Activated naive CD4-positive, alpha-beta T cell treated with anti-CD3 and anti-CD28 coated beads for 36 hours (primary cell): ENCODE measurements at regions of chr17 and their contacts with region 1.

Region 1: GRCh38 chr17:36629252-36629847 is 28.0 kb downstream of the MRM1 start:
- DNase-seq: peak; percentile 87
- H3K4me3 Mint-ChIP-seq: no peak overlapping the region
- H3K27ac Mint-ChIP-seq: no peak overlapping the region
- H3K4me1 Mint-ChIP-seq: no peaks in the 10 kb centered on the region
- H3K27me3 Mint-ChIP-seq: no peaks in the 10 kb centered on the region

Region 2: DNA sequence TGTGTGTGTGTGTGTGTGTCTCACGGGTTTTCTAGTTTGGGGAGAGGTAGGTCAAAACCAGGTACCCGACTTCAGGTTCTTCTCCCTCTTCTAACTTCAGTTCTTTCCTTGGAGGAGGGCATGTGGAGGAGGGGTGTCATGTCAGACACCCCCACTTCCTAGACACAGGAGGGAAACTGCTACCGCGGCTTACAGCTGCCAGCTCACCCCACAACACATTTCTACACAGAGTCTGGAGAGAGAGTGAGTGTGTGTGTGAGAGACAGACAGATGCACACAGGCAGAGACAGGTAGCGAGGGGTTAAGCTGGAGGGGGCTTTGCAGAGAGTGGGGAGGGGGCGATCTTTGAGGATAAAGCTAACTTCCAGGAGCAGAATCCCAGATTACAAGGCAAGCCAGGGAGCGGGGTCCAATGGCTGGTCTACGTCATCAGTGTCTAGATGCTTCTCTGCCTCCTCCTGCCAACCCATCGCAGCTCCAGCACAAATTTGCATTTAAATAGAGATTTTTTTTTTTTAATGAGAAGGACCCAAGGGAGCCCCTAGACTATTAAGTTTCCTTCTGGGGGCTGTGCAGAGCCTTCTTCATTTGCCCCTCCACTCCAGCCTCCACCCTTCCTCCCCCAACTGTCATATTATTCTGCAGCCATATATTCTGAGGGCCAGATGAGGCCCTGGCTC is 20.9 kb after region 1 on chr17:
- CTCF ChIA-PET with region 1: no interaction called
- intact Hi-C with region 1: no loop called
- DNase-seq: no peak
- H3K4me3 Mint-ChIP-seq: no peak overlapping the region
- H3K27ac Mint-ChIP-seq: no peak overlapping the region
- H3K4me1 Mint-ChIP-seq: no peaks in the 10 kb centered on the region
- H3K27me3 Mint-ChIP-seq: peaks cover 19% of the 10 kb centered on the region

Region 3: GRCh38 chr17:36755586-36755985 is 126.2 kb after region 1 on chr17:
- CTCF ChIA-PET with region 1: interaction called, 4 read pairs
- intact Hi-C with region 1: loop called (anchors 1 kb)
- DNase-seq: peak; percentile 55
- H3K4me3 Mint-ChIP-seq: no peak overlapping the region
- H3K27ac Mint-ChIP-seq: no peak overlapping the region
- H3K4me1 Mint-ChIP-seq: no peaks in the 10 kb centered on the region
- H3K27me3 Mint-ChIP-seq: no peaks in the 10 kb centered on the region

Region 4: GRCh38 chr17:37239690-37240334 is 610.5 kb after region 1 on chr17:
- CTCF ChIA-PET with region 1: no interaction called
- intact Hi-C with region 1: loop called (anchors 10 kb)
- DNase-seq: no peak
- H3K4me3 Mint-ChIP-seq: no peak overlapping the region
- H3K27ac Mint-ChIP-seq: no peak overlapping the region
- H3K4me1 Mint-ChIP-seq: no peaks in the 10 kb centered on the region
- H3K27me3 Mint-ChIP-seq: no peaks in the 10 kb centered on the region